ENCODE measurements at regions of chr7 and their contacts with region 1.

Region 1: GRCh38 chr7:23357190-23358093 is 58.3 kb downstream of the MALSU1 start:
- DNase-seq: no peak
- H3K4me3 Mint-ChIP-seq: peak overlapping the region; percentile 57
- H3K27ac Mint-ChIP-seq: peak overlapping the region; percentile 80
- H3K4me1 Mint-ChIP-seq: peaks cover 25% of the 10 kb centered on the region
- H3K27me3 Mint-ChIP-seq: peaks cover 19% of the 10 kb centered on the region

Region 2: GRCh38 chr7:22697876-22698606 is 659.4 kb before region 1 on chr7:
- intact Hi-C with region 1: loop called (anchors 5 kb)
- DNase-seq: peak; percentile 78
- H3K4me3 Mint-ChIP-seq: peak overlapping the region; percentile 48
- H3K27ac Mint-ChIP-seq: peak overlapping the region; percentile 54
- H3K4me1 Mint-ChIP-seq: peaks cover 69% of the 10 kb centered on the region
- H3K27me3 Mint-ChIP-seq: peaks cover 14% of the 10 kb centered on the region

Region 3: DNA sequence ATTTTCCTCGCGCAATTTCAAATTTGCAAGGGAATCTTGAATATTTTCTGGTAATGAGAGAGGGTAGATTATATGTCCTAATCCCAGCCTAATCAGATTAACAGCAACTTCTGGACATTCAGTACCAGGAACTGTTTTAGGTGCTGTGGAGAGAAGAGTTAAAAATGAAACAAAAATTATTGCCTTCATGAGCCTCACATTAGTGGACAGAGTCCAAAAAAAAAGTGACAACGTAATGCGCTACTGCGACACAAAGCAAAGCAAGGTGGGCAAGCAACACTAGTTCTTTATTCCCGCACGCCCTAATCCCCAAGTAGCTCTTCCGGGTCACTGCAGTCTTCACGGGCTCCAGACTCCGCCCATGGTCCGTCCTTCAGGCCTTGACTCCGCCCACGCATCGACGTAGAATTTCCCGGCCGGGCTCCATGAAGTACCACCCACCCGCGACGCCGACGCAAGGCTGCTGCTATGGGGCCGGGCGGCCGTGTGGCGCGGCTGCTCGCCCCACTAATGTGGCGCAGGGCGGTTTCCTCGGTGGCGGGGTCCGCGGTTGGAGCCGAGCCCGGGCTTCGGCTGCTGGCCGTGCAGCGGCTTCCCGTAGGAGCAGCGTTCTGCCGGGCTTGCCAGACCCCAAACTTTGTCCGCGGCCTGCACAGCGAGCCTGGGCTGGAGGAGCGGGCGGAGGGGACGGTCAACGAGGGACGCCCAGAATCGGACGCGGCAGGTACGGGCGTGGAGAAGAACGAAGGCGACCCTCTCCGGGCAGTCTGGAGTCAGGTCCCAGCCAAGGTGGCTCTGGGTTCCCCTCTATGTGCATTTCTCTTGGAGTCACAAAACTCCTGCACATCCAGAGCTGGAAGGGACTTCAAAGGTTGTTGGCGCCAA is 58.3 kb before region 1 on chr7 and contains the start of gene MALSU1:
- intact Hi-C with region 1: loop called (anchors 2 kb)
- DNase-seq: peak; percentile 99
- H3K4me3 Mint-ChIP-seq: peak within 1 kb of the TSS; percentile 93
- H3K27ac Mint-ChIP-seq: peak within 1 kb of the TSS; percentile 90
- H3K4me1 Mint-ChIP-seq: peaks cover 28% of the 10 kb centered on the region
- H3K27me3 Mint-ChIP-seq: no peaks in the 10 kb centered on the region
- total RNA-seq, gene MALSU1: 92.8 and 98.8 TPM in 2 replicates

Region 4: DNA sequence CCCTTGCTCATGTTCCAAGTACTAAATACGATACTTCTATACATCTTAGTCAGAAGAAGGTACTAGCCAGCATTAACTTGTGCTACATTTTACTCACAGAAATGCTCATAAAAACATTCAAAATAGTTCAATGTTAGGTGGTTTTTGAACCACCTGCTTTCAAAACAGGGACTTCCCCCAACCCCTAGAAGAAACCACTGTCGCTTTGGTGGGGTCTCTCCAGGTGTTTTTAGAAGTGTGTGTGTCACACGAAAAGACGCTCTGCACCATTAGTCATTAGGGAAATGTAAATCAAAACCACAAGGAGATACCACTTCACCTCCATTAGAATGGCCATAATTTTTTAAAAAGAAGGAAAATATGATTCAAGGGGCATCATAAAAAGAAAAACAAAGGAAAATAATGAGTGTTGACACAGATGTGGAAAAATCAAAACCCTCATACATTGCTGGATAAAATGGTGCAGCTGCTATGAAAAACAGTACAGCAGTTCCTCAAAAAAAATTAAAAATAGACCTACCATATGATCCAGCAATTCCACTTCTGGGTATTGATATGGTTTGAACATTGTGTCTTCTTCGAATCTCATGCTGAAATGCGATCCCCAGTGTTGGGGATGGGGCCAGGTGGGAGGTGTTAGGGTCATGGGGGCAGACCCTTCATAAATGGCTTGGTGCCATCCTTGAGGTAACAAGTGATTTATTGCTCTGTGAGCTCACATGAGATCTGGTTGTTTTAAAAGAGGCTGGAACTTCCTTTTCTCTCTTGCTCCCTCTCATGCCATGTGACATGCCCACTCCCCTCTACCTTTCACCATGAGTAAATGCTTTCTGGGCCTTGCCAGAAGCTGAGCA is 15.9 kb after region 1 on chr7:
- intact Hi-C with region 1: loop called (anchors 1 kb)
- DNase-seq: peak; percentile 80
- H3K4me3 Mint-ChIP-seq: peak overlapping the region; percentile 37
- H3K27ac Mint-ChIP-seq: peak overlapping the region; percentile 94
- H3K4me1 Mint-ChIP-seq: peaks cover 51% of the 10 kb centered on the region
- H3K27me3 Mint-ChIP-seq: peaks cover 17% of the 10 kb centered on the region

Region 5: DNA sequence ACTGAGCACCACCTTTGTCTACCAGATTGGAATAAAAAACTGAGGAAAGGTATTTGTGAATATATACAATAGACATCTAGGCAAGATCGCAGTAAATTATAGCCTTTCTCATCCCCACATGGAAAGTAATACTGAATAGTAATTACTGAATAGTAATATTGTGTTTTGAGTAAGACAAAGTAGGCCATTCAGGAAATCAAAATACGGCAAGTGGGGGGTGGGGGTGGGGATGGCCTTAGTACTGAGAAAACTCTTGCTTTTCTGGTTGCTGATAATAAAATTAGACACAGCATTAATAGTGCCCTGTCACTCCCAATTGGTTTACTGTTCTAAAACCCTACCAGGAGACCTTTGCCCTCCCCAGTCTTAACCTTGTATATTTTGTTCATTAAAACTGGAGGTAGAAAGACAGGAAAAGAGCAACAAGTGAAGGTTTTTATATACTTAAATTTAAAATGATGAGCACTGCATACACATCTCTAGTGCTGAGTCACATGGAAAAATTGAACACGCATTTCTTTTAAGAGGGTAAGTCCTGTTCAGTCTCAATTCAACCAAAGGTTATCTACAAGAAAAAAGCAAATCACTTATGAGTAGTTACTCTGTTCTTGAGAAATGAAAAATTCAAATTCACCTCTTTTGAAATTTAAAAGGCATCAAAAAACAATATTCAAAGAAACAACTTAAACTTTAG is 47.3 kb after region 1 on chr7:
- intact Hi-C with region 1: loop called (anchors 2 kb)
- DNase-seq: no peak
- H3K4me3 Mint-ChIP-seq: peak overlapping the region; percentile 23
- H3K27ac Mint-ChIP-seq: peak overlapping the region; percentile 88
- H3K4me1 Mint-ChIP-seq: peaks cover 16% of the 10 kb centered on the region
- H3K27me3 Mint-ChIP-seq: peaks cover 2% of the 10 kb centered on the region

Region 6: GRCh38 chr7:23474094-23474828 is 116.8 kb after region 1 on chr7:
- intact Hi-C with region 1: loop called (anchors 2 kb)
- DNase-seq: peak; percentile 96
- H3K4me3 Mint-ChIP-seq: peak overlapping the region; percentile 84
- H3K27ac Mint-ChIP-seq: peak overlapping the region; percentile 75
- H3K4me1 Mint-ChIP-seq: peaks cover 27% of the 10 kb centered on the region
- H3K27me3 Mint-ChIP-seq: peaks cover 60% of the 10 kb centered on the region

Region 7: GRCh38 chr7:23597094-23598091 is 240.0 kb after region 1 on chr7 and contains the start of gene CCDC126:
- intact Hi-C with region 1: loop called (anchors 5 kb)
- DNase-seq: peak; percentile 95
- H3K4me3 Mint-ChIP-seq: peak within 1 kb of the TSS; percentile 92
- H3K27ac Mint-ChIP-seq: peak within 1 kb of the TSS; percentile 85
- H3K4me1 Mint-ChIP-seq: peaks cover 52% of the 10 kb centered on the region
- H3K27me3 Mint-ChIP-seq: no peaks in the 10 kb centered on the region
- total RNA-seq, gene CCDC126: 6.2 and 8.1 TPM in 2 replicates

Region 8: DNA sequence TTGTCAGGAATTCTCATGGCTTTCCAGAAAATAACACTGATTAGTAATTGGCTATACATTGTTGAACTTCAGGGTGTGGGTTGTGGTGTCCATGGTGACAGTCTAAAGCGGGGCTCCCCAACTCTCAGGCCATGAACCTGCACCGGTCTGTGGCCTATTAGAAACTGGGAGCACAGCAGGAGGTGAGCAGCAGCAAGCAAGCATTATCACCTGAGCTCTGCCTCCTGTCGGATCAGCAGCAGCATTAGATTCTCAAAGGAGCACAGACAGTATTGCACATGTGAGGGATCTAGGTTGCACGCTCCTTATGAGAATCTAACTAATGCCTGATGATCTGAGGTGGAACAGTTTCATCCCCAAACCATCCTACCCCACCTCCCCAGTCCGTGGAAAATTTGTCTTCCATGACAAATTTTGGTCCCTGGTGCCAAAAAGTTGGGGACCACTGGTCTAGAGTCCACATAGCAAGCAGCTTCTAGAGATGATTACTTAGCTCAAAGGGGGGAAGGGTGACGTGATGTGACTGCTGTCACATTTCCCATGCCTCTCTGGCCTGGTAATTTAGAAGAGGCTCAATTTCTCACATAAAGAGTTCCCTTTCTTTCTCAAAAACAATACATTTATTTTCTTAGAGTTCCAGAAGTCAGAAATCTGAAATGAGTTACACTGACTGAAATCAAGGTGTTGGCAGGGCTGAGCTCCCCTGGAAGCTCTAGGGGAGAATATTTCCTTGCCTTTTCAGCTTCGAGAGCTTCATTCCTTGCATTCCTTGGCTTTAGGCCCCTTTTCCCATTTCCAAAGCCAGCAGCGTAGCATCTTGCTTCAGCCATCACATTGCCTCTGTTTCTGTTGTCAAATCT is 304.9 kb after region 1 on chr7:
- intact Hi-C with region 1: no loop called
- DNase-seq: no peak
- H3K4me3 Mint-ChIP-seq: no peak overlapping the region
- H3K27ac Mint-ChIP-seq: no peak overlapping the region
- H3K4me1 Mint-ChIP-seq: no peaks in the 10 kb centered on the region
- H3K27me3 Mint-ChIP-seq: peaks cover 2% of the 10 kb centered on the region

Measured in activated CD4-positive, alpha-beta T cell treated with anti-CD3 and anti-CD28 coated beads, Interleukin-2, amount 10 ng/mL, durations not matched to agents 24 days and 14 days (primary cell).